ENCODE measurements at regions of chr9 and their contacts with region 1.

Region 1: DNA sequence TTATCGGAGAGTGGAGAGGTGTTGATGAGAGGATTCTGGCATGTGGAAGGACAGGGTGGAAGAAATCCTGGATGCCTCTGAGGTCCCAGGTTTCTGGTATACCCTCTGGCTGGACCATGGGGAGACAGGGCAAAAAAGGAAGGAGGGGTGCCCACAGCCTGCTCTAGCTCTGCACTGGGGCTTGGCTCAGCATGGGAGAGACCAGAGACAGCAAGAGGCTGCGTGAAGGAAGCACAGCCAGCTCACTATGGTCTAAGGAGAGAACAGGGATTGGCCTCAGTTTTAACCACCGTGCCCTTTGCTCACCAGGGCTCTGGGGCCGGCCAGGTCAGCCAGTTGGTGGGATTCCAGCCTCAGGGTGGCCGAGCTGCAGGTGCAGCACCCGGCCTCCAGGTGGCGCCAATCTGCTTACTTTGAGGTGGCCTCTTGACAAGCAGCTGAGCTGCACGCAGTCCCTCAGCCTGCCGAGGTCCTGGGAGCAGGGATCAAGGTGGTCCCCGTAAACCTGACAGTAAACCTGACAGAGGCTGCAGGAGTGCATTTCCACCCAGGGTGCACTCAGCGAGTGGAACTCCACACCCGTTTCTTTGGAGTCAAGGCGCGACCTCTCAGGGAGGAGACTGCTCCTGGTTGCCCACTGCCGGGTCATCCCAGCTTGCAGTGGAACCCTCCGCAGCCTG is 25.0 kb upstream of the SPTLC1 start:
- DNase-seq: peak; percentile 34 to 83 (median 71)
- ATAC-seq: peak; percentile 71
- H3K4me3 ChIP-seq: peak overlapping the region; percentile 8
- H3K4me3 Mint-ChIP-seq: peak overlapping the region; percentile 26
- H3K27ac ChIP-seq: no peak overlapping the region
- H3K27ac Mint-ChIP-seq: no peak overlapping the region
- H3K4me1 ChIP-seq: peaks cover 8% of the 10 kb centered on the region
- H3K4me1 Mint-ChIP-seq: peaks cover 8% of the 10 kb centered on the region
- H3K27me3 ChIP-seq: peaks cover 3 to 8% of the 10 kb centered on the region in 2 experiments
- H3K27me3 Mint-ChIP-seq: peaks cover 38% of the 10 kb centered on the region
- CTCF ChIP-seq: peak; percentile 95

Region 2: GRCh38 chr9:92438900-92439526 is 298.8 kb after region 1 on chr9:
- CTCF ChIA-PET with region 1: interaction called, 13 read pairs
- POLR2A ChIA-PET with region 1: no interaction called
- intact Hi-C with region 1: loop called in 1 of 2 experiments (anchors 1 kb)
- DNase-seq: peak in 2 of 9 experiments; percentile 9 to 34
- ATAC-seq: no peak
- H3K4me3 ChIP-seq: no peak overlapping the region
- H3K4me3 Mint-ChIP-seq: no peak overlapping the region
- H3K27ac ChIP-seq: peak overlapping the region in 1 of 2 experiments; percentile 74
- H3K27ac Mint-ChIP-seq: no peak overlapping the region
- H3K4me1 ChIP-seq: no peaks in the 10 kb centered on the region
- H3K4me1 Mint-ChIP-seq: peaks cover 3% of the 10 kb centered on the region
- H3K27me3 ChIP-seq: no peaks in the 10 kb centered on the region
- H3K27me3 Mint-ChIP-seq: no peaks in the 10 kb centered on the region
- CTCF ChIP-seq: peak; percentile 13

Region 3: DNA sequence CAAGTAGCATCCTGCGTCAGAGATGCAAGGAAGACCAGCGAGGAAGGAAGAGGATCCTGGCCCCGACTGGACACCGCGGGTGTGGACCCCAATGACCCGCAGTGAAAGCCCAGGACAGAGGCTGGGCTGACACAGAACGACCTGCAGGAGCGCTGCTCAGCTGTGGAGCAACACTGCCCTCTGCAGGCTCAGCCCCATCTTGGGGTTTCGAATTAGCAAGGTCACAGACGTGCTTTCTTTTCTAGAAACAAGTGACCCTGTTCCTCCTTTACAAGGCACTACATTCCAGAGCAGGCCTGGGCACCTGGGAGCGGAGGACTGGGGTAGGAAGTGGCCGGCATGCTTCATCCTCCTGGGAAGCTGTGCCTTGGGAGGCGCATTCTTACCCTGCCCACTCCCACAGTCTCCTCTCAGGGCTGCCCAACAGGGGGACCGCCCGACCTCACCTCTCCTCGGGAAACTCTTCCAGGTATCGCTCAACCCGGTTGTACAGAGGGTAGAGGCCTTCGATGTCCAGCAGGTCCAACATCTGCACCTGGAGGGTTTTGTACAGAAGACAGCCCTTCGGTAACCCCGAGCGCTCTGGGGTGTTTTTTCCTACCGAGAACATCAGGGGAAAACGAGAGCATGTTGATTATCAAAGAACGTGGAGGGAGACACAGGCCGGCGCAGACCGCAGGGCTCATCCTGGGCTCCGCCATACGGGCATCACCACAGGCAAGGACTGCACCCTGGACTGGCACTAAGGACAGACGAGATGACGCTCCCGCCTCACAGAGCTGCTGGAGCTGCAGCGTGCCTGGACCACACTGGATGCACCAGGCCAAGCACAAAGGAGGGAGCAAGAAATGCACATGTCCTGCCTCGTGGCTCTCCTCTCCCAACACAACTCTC is 494.7 kb after region 1 on chr9:
- CTCF ChIA-PET with region 1: interaction called, 30 read pairs
- POLR2A ChIA-PET with region 1: no interaction called
- intact Hi-C with region 1: loop called in 1 of 2 experiments (anchors 1 kb)
- DNase-seq: peak; percentile 31 to 71 (median 54)
- ATAC-seq: peak; percentile 71
- H3K4me3 ChIP-seq: no peak overlapping the region
- H3K4me3 Mint-ChIP-seq: no peak overlapping the region
- H3K27ac ChIP-seq: no peak overlapping the region
- H3K27ac Mint-ChIP-seq: no peak overlapping the region
- H3K4me1 ChIP-seq: no peaks in the 10 kb centered on the region
- H3K4me1 Mint-ChIP-seq: peaks cover 2% of the 10 kb centered on the region
- H3K27me3 ChIP-seq: no peaks in the 10 kb centered on the region
- H3K27me3 Mint-ChIP-seq: no peaks in the 10 kb centered on the region
- CTCF ChIP-seq: peak; percentile 61

Region 4: DNA sequence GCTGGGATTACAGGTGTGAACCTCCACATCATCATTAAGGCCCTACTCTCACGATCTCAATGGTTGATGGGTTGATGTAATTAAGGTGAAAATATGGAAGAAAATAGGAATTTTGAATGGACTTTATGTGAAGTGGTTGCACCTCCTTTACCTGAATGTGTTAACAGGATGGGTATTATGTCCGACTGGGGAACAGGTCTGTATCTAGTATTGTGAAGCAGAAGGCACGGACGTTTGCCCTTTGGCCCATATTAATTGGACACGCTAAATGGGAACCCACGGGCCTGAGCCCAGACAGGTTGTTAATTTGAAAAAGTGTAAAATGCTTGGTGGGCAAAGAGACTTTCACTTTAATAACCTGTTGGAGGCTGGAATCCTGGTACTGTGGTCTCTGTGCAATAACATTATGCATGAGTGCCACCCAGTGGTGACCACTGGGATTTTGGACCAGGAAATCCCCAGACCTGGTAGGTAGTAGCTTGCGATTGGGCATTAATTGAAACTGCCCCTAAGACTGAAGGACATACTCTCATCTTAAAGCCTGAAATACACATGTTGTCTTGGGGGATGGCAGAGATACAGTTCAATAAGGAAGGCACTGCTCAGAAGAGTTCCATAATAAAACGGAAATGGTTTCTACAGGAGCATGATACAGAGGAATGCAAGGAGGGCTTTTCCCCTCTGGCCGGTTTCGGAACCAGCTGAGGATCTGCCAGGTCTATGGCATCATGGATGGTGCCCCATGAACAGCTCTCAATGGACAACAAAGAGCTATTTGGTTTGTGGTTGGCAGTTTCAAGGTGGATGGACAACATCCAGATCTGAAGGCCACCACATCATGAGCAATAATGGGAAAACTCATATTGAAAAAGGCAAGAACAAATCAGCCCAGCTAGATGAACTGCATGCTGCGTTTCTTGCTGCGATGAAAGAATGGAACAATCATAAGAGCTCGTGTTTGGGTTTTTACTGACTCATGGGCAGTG is 650.6 kb after region 1 on chr9:
- CTCF ChIA-PET with region 1: interaction called, 24 read pairs
- POLR2A ChIA-PET with region 1: no interaction called
- intact Hi-C with region 1: loop called in 1 of 2 experiments (anchors 1 kb)
- DNase-seq: peak; percentile 60 to 85 (median 79)
- ATAC-seq: peak; percentile 98
- H3K4me3 ChIP-seq: no peak overlapping the region
- H3K4me3 Mint-ChIP-seq: no peak overlapping the region
- H3K27ac ChIP-seq: no peak overlapping the region
- H3K27ac Mint-ChIP-seq: no peak overlapping the region
- H3K4me1 ChIP-seq: no peaks in the 10 kb centered on the region
- H3K4me1 Mint-ChIP-seq: peaks cover 4% of the 10 kb centered on the region
- H3K27me3 ChIP-seq: no peaks in the 10 kb centered on the region
- H3K27me3 Mint-ChIP-seq: peaks cover 3% of the 10 kb centered on the region
- CTCF ChIP-seq: peak; percentile 78